ENCODE measurements at regions of chr1 and their contacts with region 1.

Region 1: GRCh38 chr1:179809506-179810366 is 66.6 kb downstream of the FAM163A start:
- DNase-seq: peak; percentile 46
- H3K4me3 ChIP-seq: no peak overlapping the region
- H3K27ac ChIP-seq: no peak overlapping the region
- H3K27me3 ChIP-seq: peaks cover 37% of the 10 kb centered on the region
- CTCF ChIP-seq: peak; percentile 92

Region 2: DNA sequence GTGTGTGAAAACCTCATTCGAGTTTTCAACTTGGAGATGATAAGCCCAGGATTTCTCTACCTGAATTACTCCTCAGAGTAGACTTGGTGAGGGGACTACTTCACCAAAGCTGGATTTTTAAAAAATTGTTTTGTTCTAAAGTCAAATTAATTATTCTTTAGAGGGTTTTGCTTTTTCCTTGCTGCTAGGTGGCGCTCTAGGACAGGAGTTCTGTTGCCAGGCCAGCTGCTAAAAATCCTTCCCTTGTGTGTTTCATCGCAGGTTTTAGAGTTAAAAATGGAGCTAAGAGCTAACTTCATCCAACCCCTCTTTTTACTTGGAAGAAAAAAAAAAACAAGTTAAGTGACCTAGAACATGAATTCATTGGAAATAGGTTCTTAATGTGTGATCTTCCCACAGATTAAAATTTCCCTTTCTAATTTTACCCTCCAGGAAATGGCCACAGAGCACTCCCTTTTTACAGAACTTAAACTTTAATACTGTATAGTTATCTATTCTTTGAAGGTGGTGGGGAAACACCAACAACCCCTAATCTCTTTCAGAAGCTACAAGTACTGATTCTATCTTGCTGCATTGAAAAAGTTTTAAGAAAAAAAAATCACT is 103.3 kb before region 1 on chr1:
- CTCF ChIA-PET with region 1: interaction called, 1,155 read pairs
- POLR2A ChIA-PET with region 1: interaction called, 5 read pairs
- DNase-seq: peak; percentile 38
- H3K4me3 ChIP-seq: no peak overlapping the region
- H3K27ac ChIP-seq: no peak overlapping the region
- H3K27me3 ChIP-seq: peaks cover 2% of the 10 kb centered on the region
- CTCF ChIP-seq: peak; percentile 80

Region 3: GRCh38 chr1:179728271-179728670 is 81.5 kb before region 1 on chr1:
- CTCF ChIA-PET with region 1: interaction called, 15 read pairs
- POLR2A ChIA-PET with region 1: no interaction called
- DNase-seq: no peak
- H3K4me3 ChIP-seq: no peak overlapping the region
- H3K27ac ChIP-seq: no peak overlapping the region
- H3K27me3 ChIP-seq: peaks cover 3% of the 10 kb centered on the region
- CTCF ChIP-seq: no peak

Region 4: DNA sequence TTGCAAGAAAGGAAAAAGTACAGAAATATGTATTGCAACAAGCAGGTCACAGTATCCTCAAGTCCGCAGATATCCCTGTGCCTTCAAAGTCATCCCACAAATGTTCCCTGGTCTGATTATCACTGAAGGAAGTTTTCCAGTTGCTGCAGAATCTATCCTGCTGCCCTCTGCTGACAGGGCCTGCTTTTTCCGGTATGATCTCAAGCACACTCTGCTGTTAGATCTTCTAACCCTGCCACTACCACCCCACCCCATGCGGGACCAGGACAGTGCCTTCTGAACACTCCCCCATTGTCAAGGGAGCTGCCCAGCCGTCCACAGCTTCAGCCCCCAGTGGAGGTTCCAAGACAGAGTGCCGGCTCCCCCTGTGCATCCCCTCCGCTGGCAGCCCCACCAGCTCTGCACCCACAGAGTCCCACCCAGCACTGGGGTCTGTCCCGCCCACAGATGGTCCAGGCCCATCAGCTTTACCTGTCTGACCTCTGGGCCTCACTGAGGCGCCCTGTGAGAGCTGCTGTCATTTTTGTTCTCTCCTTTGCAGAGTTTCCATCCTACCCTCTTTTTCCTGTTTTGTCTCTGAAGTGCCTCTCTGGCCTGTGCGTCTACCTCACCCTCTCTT is 38.7 kb before region 1 on chr1:
- CTCF ChIA-PET with region 1: interaction called, 18 read pairs
- POLR2A ChIA-PET with region 1: no interaction called
- DNase-seq: no peak
- H3K4me3 ChIP-seq: no peak overlapping the region
- H3K27ac ChIP-seq: no peak overlapping the region
- H3K27me3 ChIP-seq: peaks cover 5% of the 10 kb centered on the region
- CTCF ChIP-seq: peak; percentile 7; the same call in 1 of the 2 replicates

Region 5: GRCh38 chr1:179786815-179787685 is 22.7 kb before region 1 on chr1:
- CTCF ChIA-PET with region 1: interaction called, 32 read pairs
- POLR2A ChIA-PET with region 1: no interaction called
- DNase-seq: no peak
- H3K4me3 ChIP-seq: no peak overlapping the region
- H3K27ac ChIP-seq: no peak overlapping the region
- H3K27me3 ChIP-seq: peaks cover 32% of the 10 kb centered on the region
- CTCF ChIP-seq: no peak

Region 6: GRCh38 chr1:179824265-179824664 is 14.5 kb after region 1 on chr1:
- CTCF ChIA-PET with region 1: interaction called, 97 read pairs
- POLR2A ChIA-PET with region 1: no interaction called
- DNase-seq: no peak
- H3K4me3 ChIP-seq: no peak overlapping the region
- H3K27ac ChIP-seq: no peak overlapping the region
- H3K27me3 ChIP-seq: peaks cover 15% of the 10 kb centered on the region
- CTCF ChIP-seq: no peak

Region 7: GRCh38 chr1:179840107-179840506 is 30.4 kb after region 1 on chr1:
- CTCF ChIA-PET with region 1: interaction called, 64 read pairs
- POLR2A ChIA-PET with region 1: no interaction called
- DNase-seq: no peak
- H3K4me3 ChIP-seq: no peak overlapping the region
- H3K27ac ChIP-seq: no peak overlapping the region
- H3K27me3 ChIP-seq: no peaks in the 10 kb centered on the region
- CTCF ChIP-seq: no peak